ENCODE measurements at regions of chr1 and their contacts with region 1.

Region 1: GRCh38 chr1:177328251-177328650 is 157.5 kb downstream of the BRINP2 start:
- DNase-seq: no peak
- ATAC-seq: no peak
- H3K4me3 ChIP-seq: no peak overlapping the region
- H3K27ac ChIP-seq: no peak overlapping the region
- H3K4me1 ChIP-seq: no peaks in the 10 kb centered on the region
- H3K27me3 ChIP-seq: no peaks in the 10 kb centered on the region
- CTCF ChIP-seq: no peak
- POLR2A ChIP-seq: no peak
- RAD21 ChIP-seq: no peak

Region 2: GRCh38 chr1:177273141-177273540 is 55.1 kb before region 1 on chr1:
- CTCF ChIA-PET with region 1: no interaction called
- POLR2A ChIA-PET with region 1: no interaction called
- RAD21 ChIA-PET with region 1: no interaction called
- intact Hi-C with region 1: loop called (anchors 2 kb)
- DNase-seq: no peak
- ATAC-seq: no peak
- H3K4me3 ChIP-seq: no peak overlapping the region
- H3K27ac ChIP-seq: no peak overlapping the region
- H3K4me1 ChIP-seq: no peaks in the 10 kb centered on the region
- H3K27me3 ChIP-seq: peaks cover 6% of the 10 kb centered on the region; the same call in 1 of the 2 replicates
- CTCF ChIP-seq: no peak
- POLR2A ChIP-seq: no peak
- RAD21 ChIP-seq: no peak

Region 3: DNA sequence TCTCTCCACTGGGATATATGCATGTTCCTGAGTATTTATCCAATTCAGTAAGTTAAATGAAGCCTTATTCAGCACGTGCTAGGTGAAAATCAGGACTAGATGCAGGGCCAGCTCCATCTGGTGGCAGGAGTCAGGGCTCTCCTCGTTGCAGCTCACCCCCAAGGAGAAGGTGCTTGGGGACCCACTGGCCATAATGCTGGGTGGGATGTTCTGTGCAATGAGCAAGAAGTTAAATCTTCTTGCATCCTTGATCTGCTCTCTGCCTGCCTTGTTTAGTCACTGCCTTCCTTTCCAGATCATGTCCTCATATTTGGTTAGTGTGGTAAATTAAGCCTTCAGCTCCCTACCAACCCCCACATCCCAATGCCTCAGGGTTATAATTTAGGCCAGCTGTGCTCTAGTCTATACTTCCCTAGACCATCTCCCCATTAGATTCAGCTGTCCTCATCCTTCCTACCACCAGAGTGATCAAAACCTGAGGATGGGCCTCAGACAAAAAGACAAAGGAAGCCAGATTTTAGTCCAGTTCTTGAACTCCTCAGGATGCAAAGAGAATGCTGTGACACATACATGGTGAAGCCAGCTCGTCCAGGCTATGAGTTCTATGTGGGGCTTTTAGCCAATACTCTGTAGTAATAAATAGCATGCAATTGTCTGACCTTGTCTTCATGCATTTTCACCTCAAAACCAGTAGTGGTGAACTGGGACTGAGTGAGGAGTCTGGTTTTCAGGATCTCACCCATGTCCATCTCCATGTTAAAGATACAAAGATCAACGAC is 585.7 kb after region 1 on chr1:
- CTCF ChIA-PET with region 1: no interaction called
- POLR2A ChIA-PET with region 1: no interaction called
- RAD21 ChIA-PET with region 1: no interaction called
- intact Hi-C with region 1: no loop called
- DNase-seq: peak; percentile 13
- ATAC-seq: peak; percentile 81
- H3K4me3 ChIP-seq: no peak overlapping the region
- H3K27ac ChIP-seq: no peak overlapping the region
- H3K4me1 ChIP-seq: peaks cover 0 to 10% of the 10 kb centered on the region in 2 experiments; a peak in 2 of 4 replicates
- H3K27me3 ChIP-seq: peaks cover 18% of the 10 kb centered on the region
- CTCF ChIP-seq: peak; percentile 22 to 64 (median 63); a peak in 5 of 6 replicates
- POLR2A ChIP-seq: no peak
- RAD21 ChIP-seq: peak; percentile 56